ENCODE measurements at regions of chr1 and their contacts with region 1.

Region 1: DNA sequence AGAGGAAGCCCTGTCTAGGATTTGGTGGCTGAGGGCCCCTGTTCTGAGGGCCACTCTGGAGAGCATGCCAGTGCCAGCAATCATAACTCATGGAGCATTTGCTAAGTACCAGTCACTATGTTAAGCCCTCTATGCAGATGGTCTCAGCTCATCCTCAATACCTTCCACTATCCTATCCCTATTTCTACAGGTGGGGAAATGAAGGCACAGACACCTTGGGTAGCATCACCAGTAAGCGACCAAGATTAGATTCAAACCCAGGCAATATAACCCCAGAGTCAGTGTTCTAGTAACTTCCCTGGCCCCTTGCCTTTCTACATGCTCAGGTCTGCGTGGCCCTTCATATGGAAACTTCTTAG is 7.9 kb upstream of the NBPF1 start:
- DNase-seq: no peak
- H3K4me3 ChIP-seq: no peak overlapping the region
- H3K27ac ChIP-seq: no peak overlapping the region
- H3K4me1 ChIP-seq: no peaks in the 10 kb centered on the region
- H3K27me3 ChIP-seq: no peaks in the 10 kb centered on the region
- CTCF ChIP-seq: peak in 1 of 3 donors; percentile 6
- EP300 ChIP-seq: no peak
- POLR2A ChIP-seq: no peak

Region 2: GRCh38 chr1:16946646-16947045 is 325.4 kb after region 1 on chr1:
- intact Hi-C with region 1: loop called in 2 of 4 experiments (anchors 1 to 5 kb)
- DNase-seq: no peak
- H3K4me3 ChIP-seq: no peak overlapping the region
- H3K27ac ChIP-seq: no peak overlapping the region
- H3K4me1 ChIP-seq: no peaks in the 10 kb centered on the region
- H3K27me3 ChIP-seq: no peaks in the 10 kb centered on the region
- CTCF ChIP-seq: no peak
- EP300 ChIP-seq: no peak
- POLR2A ChIP-seq: no peak